Cardiac septum (tissue), 1 donor: ENCODE measurements at regions of chr1 and their contacts with region 1.

Region 1: DNA sequence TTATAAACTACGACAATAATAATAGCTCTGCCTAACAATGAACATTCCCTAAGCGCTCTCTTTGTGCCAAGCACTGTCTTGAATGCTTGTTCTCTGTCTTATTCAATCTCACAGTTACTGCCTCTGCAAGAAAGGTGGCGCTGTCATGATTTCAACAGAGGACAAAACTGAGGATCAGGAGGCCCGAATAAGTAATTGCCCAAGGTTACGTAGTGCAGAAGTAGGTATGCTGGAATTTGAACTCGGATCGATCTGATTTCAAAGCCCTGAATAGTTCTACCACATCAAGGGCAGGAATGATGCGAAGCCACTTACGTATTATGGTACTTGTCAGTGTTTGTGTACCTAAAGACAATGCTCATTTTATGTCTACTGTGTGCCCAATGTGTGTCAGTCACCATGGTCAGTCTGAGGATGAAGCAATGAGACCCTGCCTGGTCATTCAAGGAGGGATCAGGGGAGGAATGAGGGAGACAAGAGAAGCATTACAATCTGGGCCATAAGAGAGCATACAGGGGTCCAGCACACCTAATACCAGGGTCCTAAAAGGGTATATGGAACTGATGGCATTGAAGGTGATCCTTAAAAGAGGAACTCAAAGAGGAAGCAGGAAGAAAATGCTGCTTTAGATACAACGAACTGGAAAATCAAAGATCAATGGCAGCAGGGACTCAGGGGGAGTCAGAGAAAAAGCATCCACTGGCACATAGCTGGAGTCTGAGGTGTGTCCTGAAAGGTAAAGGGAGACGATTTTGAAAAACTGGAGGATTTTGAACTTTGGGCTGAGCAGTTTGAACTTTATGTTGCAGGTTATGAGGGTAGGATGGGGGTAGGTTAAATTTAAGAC is 389.2 kb downstream of the PLPP3 start:
- DNase-seq: no peak

Region 2: GRCh38 chr1:56284928-56285327 is 94.8 kb after region 1 on chr1:
- intact Hi-C with region 1: loop called (anchors 5 kb)
- DNase-seq: no peak

Region 3: DNA sequence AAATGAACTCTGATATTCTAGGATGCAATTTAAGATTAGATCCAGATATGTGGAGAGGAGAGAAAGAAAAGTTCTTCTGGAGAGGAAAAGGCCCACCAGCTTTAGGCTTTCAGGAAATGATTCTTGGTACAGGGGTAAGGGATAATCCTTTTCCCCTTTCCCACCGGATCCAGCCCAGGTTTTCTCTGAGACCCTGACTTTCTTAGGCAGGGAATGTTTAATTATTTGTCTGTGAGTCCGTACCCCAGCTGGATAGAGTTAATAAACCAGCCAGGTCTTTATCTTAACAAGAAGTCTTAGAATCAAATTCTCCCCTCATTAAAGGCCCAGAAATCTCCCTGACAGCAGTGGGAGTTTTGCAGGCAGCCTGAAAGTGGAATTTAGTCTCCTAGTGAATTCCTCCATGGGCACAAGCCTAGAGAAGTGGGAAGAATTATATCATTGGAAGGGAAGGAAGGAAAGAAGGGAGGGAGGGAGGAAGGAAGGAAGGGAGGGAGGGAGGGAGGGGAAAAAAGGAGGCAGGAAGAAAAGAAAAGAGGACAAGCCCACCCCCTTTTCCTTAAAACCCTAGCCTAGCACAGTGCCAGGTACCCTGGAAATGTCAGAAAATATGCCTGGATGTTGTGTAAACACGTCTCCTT is 200.2 kb after region 1 on chr1:
- intact Hi-C with region 1: loop called (anchors 5 kb)
- DNase-seq: no peak